BJ (cell line): ENCODE measurements at regions of chr17 and their contacts with region 1.

Region 1: DNA sequence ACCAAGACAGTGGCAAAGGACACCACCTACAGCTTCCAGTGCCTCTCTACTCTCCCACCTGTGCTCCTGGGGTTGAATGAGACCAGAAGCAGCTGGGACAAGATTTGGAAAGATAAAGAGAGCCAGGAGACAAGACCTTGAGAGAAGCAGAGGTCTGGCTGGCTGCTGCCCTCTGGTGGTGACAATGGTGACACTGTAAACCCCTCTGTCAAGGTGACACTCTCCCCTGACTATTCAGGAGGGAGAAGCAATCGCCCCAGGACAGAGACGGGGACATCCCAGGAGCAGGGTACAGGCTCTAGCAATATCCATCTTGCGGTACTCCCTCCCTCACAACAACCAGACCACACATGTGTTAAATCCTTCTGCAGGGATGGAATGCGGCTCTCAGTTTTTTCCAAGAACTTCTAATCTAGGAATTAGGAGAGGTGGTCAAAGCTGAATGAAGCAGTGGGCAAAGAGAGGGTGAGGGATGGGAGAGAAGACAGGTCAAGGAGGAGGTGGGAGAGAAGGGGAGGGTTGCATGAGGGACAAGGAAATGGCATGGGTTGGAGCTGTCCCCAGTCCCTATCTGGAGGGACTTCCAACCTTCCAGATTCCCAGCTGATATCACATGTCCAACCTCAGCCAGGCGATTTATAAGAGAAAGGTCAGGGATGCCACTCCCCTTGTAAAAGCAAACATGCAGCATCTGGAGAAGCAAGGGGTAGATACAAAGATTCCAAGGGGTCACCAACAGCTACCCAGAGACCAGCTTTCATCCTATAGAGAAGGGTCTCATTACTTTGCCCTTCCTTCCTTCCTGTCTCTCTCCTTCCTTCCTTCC is 2.9 kb downstream of the PHOSPHO1 start:
- DNase-seq: no peak
- H3K4me3 ChIP-seq: no peak overlapping the region
- H3K27me3 ChIP-seq: peaks cover 34% of the 10 kb centered on the region
- CTCF ChIP-seq: peak; percentile 88

Region 2: GRCh38 chr17:48215583-48216139 is 1012.0 kb before region 1 on chr17:
- CTCF ChIA-PET with region 1: no interaction called
- POLR2A ChIA-PET with region 1: no interaction called
- DNase-seq: no peak
- H3K4me3 ChIP-seq: no peak overlapping the region
- H3K27me3 ChIP-seq: peaks cover 20% of the 10 kb centered on the region
- CTCF ChIP-seq: peak; percentile 65

Region 3: GRCh38 chr17:49180303-49180702 is 47.3 kb before region 1 on chr17:
- CTCF ChIA-PET with region 1: interaction called, 84 read pairs
- POLR2A ChIA-PET with region 1: no interaction called
- DNase-seq: no peak
- H3K4me3 ChIP-seq: no peak overlapping the region
- H3K27me3 ChIP-seq: peaks cover 4% of the 10 kb centered on the region; the same call in 1 of the 2 replicates
- CTCF ChIP-seq: peak; percentile 87

Region 4: DNA sequence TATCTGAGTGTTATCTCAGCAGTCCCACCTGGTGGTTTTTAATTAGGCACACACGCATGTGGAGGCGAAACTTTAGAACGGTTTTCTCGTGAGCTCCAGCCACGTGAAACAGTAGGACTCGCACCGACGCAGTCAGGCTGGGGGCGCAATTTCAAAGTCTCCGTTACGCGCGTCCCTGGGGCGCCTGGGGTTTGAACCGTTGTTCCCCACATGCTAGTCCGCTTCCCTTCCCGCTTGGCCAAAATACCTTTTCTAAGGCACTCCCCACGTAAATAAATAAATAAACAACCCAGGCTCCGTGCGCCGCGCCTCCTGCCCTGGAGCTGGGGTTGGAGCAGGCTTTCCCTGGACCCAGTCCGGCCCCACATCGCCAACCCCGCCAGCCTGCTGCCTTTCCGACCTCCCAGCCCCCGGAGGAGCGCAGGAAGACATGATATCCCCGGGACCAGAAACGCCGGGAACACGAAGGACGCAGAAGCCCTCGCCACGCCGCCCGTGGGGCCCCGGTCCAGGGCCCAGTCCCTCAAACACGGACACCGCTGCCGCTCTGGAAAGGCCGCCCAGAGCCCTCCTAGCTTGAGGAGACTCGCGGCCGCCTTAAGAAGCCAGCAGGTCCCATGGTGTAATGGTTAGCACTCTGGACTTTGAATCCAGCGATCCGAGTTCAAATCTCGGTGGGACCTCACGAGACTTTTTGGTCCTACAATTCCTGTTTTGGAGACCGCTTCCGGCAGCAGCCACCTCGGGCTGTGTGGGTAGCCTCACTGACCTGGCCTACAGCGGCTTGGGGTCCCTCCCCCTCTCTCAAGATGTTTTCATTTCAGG is 35.5 kb before region 1 on chr17:
- CTCF ChIA-PET with region 1: interaction called, 64 read pairs
- POLR2A ChIA-PET with region 1: no interaction called
- DNase-seq: peak; percentile 41
- H3K4me3 ChIP-seq: peak overlapping the region; percentile 65
- H3K27me3 ChIP-seq: no peaks in the 10 kb centered on the region
- CTCF ChIP-seq: peak; percentile 45

Region 5: DNA sequence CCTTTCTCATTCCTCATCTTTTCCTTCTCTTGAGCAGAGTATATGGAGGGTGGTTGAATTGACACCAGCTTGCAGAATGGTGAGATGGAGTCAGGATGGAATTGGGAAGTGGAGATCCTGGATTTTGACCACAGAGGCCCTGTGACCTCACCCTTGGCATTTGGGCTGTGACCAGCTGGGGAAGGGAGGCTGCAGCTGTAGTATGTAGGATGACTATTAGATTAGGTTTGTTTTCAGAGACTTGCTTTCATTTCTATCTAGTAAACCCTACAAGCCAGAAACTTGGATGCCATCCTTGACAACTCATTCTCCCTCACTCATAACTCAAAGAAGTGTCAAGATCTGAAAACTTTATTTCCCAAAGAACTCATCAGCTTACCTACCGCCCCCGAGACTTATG is 23.1 kb before region 1 on chr17:
- CTCF ChIA-PET with region 1: interaction called, 64 read pairs
- POLR2A ChIA-PET with region 1: no interaction called
- DNase-seq: no peak
- H3K4me3 ChIP-seq: no peak overlapping the region
- H3K27me3 ChIP-seq: no peaks in the 10 kb centered on the region; the same call in 1 of the 2 replicates
- CTCF ChIP-seq: no peak

Region 6: GRCh38 chr17:49210158-49211029 is 17.3 kb before region 1 on chr17 and contains the starts of genes ABI3 and GNGT2:
- CTCF ChIA-PET with region 1: interaction called, 55 read pairs
- POLR2A ChIA-PET with region 1: no interaction called
- DNase-seq: no peak
- H3K4me3 ChIP-seq: 0 out of 2 replicates have a peak within 1 kb of the TSS, but pooled peaks have one; percentile 8
- H3K27me3 ChIP-seq: no peaks in the 10 kb centered on the region
- CTCF ChIP-seq: no peak
- polyA plus RNA-seq, gene ABI3: 0.71 and 1.5 TPM in 2 replicates
- polyA plus RNA-seq, gene GNGT2: 0.45 and 0.66 TPM in 2 replicates

Region 7: GRCh38 chr17:49239963-49240362 is 12.3 kb after region 1 on chr17:
- CTCF ChIA-PET with region 1: interaction called, 12 read pairs
- POLR2A ChIA-PET with region 1: no interaction called
- DNase-seq: no peak
- H3K4me3 ChIP-seq: no peak overlapping the region
- H3K27me3 ChIP-seq: peaks cover 6% of the 10 kb centered on the region
- CTCF ChIP-seq: no peak

Region 8: GRCh38 chr17:49290690-49291359 is 63.2 kb after region 1 on chr17:
- CTCF ChIA-PET with region 1: interaction called, 23 read pairs
- POLR2A ChIA-PET with region 1: no interaction called
- DNase-seq: no peak
- H3K4me3 ChIP-seq: no peak overlapping the region
- H3K27me3 ChIP-seq: no peaks in the 10 kb centered on the region
- CTCF ChIP-seq: peak; percentile 75